ENCODE measurements at regions of chr15 and their contacts with region 1.

Region 1: GRCh38 chr15:67109141-67110034 is 44.0 kb downstream of the SMAD3 start:
- DNase-seq: peak; percentile 76
- ATAC-seq: peak; percentile 83
- H3K4me3 Mint-ChIP-seq: peak overlapping the region; percentile 67
- H3K27ac Mint-ChIP-seq: peak overlapping the region; percentile 92
- H3K4me1 Mint-ChIP-seq: peaks cover 14% of the 10 kb centered on the region
- H3K27me3 Mint-ChIP-seq: no peaks in the 10 kb centered on the region
- CTCF ChIP-seq: no peak

Region 2: DNA sequence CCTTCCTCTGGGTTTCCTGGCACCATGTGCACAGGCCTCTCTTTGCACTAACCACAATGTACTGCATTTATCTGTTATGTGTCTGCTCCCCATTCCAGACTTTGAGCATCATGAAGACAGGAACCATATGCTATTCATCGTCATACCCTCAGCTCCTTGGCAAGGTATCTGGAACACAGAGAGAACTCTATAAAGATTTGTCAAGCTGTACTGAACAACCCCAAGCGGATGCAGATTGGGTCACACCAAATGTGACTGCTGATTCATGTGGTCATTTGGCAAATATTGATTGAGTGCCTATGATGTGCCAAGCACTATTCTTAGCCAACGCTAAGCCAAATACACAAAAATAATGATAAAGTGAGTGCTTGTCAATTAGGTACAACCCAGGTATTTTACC is 848.3 kb before region 1 on chr15:
- CTCF ChIA-PET with region 1: no interaction called
- POLR2A ChIA-PET with region 1: no interaction called
- intact Hi-C with region 1: no loop called
- DNase-seq: no peak
- ATAC-seq: no peak
- H3K4me3 Mint-ChIP-seq: no peak overlapping the region
- H3K27ac Mint-ChIP-seq: no peak overlapping the region
- H3K4me1 Mint-ChIP-seq: no peaks in the 10 kb centered on the region
- H3K27me3 Mint-ChIP-seq: peaks cover 26% of the 10 kb centered on the region
- CTCF ChIP-seq: no peak

Region 3: DNA sequence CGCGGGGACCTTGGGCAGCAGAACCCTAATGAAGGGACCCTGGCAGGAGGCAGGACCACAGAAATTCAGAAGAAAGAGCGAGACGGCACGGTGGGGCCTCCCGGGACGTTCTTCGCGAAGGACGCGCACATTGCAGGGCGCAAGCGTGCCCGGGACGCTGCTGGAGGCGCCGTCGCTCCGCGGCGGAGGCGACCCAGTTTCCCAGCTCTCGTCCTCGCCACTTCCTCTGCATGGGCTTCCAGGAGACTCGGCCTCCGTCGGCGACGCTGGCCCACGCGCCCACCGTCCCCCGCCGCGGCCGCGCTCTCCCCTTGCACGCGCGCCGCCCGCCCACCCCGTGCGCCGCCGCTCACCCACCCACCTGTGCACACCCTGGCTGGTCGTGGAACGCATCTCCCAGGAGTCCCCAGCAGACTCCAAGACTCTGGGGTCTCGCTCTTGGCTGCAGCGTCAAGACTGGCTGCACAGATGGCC is 75.8 kb before region 1 on chr15:
- CTCF ChIA-PET with region 1: no interaction called
- POLR2A ChIA-PET with region 1: no interaction called
- intact Hi-C with region 1: no loop called
- DNase-seq: no peak
- ATAC-seq: peak; percentile 59
- H3K4me3 Mint-ChIP-seq: peak overlapping the region; percentile 51
- H3K27ac Mint-ChIP-seq: no peak overlapping the region
- H3K4me1 Mint-ChIP-seq: peaks cover 26% of the 10 kb centered on the region
- H3K27me3 Mint-ChIP-seq: peaks cover 4% of the 10 kb centered on the region
- CTCF ChIP-seq: no peak

Region 4: GRCh38 chr15:67085818-67086636 is 23.4 kb before region 1 on chr15:
- CTCF ChIA-PET with region 1: interaction called, 10 read pairs
- POLR2A ChIA-PET with region 1: interaction called, 1,703 read pairs
- intact Hi-C with region 1: loop called (anchors 1 kb)
- DNase-seq: no peak
- ATAC-seq: peak; percentile 51
- H3K4me3 Mint-ChIP-seq: peak overlapping the region; percentile 59
- H3K27ac Mint-ChIP-seq: peak overlapping the region; percentile 95
- H3K4me1 Mint-ChIP-seq: peaks cover 100% of the 10 kb centered on the region
- H3K27me3 Mint-ChIP-seq: no peaks in the 10 kb centered on the region
- CTCF ChIP-seq: no peak

Region 5: GRCh38 chr15:67091071-67091979 is 18.1 kb before region 1 on chr15:
- CTCF ChIA-PET with region 1: interaction called, 6 read pairs
- POLR2A ChIA-PET with region 1: interaction called, 1,703 read pairs
- intact Hi-C with region 1: loop called (anchors 1 kb)
- DNase-seq: no peak
- ATAC-seq: peak; percentile 46
- H3K4me3 Mint-ChIP-seq: peak overlapping the region; percentile 74
- H3K27ac Mint-ChIP-seq: peak overlapping the region; percentile 95
- H3K4me1 Mint-ChIP-seq: peaks cover 100% of the 10 kb centered on the region
- H3K27me3 Mint-ChIP-seq: no peaks in the 10 kb centered on the region
- CTCF ChIP-seq: no peak

Region 6: DNA sequence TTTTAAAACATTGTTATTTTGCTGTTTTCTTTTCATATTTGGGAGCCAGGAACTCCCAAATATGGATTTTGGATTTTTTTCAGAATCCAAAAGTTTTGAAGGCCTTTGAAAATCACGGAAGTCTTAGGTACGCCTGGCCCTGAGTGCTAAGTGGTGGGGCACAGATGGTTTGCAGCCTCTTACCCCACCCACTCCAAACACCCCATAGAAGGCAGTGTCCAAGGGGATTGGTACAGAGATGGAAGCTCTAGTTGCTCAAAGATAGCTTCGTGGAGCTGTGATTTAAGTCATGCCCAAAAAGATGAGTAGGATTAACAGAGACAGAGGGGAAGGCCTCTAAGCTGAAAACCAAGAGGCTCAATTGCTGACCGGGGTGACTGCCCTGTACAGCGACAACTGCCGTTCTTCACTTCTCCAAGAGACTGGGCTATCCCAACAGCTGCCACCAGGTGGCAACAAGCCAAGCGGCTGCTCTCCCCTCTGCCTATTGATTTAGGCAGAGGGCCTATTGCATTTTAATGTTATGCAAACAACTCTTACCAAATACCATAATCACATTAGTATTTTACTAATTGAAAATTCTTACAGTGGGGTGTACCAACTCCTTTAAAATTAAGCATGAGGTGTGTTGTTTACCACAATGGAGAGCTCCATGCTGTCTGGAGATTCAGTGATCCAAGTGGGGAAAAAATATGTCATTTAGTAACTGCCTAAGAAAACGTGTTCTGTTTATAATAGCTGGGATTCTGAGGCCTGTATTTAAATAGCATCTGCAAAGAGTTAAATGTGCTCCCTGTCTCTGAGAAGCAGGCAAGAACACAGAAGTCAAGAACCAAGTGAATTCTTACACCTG is 347.5 kb after region 1 on chr15:
- CTCF ChIA-PET with region 1: no interaction called
- POLR2A ChIA-PET with region 1: no interaction called
- intact Hi-C with region 1: no loop called
- DNase-seq: peak; percentile 70
- ATAC-seq: peak; percentile 97
- H3K4me3 Mint-ChIP-seq: no peak overlapping the region
- H3K27ac Mint-ChIP-seq: no peak overlapping the region
- H3K4me1 Mint-ChIP-seq: no peaks in the 10 kb centered on the region
- H3K27me3 Mint-ChIP-seq: peaks cover 4% of the 10 kb centered on the region
- CTCF ChIP-seq: peak; percentile 85

Measured in activated B cell treated with CpG ODN at 0.5 μM for 24 hours (primary cell).